ENCODE measurements at regions of chr7 and their contacts with region 1.

Region 1: GRCh38 chr7:96449094-96449493 is 127.2 kb upstream of the SLC25A13 start:
- DNase-seq: no peak

Region 2: DNA sequence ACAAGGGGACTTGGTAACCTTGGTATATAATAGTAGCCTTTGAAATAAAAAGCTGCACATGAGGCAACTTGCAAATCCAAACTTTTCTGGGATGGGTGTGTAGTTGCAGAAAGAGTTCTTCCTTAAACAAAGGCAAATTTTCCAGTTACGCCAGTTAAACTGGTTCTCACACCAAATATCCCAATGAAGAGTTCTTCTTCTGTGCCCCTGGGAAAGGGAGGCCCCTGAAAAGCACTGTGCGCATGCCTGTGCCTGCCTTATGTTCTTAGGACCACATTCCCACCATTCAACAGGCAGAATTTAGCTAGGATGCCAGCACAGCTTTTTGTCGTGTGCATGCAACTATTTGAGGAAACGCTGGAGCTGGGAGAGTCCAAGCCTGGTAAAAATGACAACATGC is 37.6 kb after region 1 on chr7:
- intact Hi-C with region 1: no loop called
- DNase-seq: no peak

Region 3: DNA sequence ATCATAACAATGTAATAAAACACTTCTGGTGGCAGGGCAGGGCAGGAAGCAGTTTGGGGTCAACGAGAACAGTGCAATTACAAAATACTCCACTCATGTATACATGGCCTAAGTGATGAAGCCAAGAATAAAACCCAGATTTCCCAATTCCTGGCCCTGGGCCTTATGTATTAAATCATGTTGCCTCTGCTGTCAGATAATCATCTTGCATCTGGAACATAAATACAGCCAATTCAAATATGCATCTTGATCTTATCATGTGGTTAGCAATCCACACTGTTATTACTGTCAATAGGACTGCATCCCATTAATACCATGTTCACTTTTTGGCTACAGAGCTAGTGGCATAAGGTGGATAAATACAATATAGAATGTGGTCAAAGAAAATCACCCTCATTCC is 59.3 kb after region 1 on chr7:
- intact Hi-C with region 1: loop called (anchors 10 kb)
- DNase-seq: no peak

Measured in cardiac septum (tissue), 1 donor.